OCI-LY7 (cell line): ENCODE measurements at regions of chr3 and their contacts with region 1.

Region 1: DNA sequence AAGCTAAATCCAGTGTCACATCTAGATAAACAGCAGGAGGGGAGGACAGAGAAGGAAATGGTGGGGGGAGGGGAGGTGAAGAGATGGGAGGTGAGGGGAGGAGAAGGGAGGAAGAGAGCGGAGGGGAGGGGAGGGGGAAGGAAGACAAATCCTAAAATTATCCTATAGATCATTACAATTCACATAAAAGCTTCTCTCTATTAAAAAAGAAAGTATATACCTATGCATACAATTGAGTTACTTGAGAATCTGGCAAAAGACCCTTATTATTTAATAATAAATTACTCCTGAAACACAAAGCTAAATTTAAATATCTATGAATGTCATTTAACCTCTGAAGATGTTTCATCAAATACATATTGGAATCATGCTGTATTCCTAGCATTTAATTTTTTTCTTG is 303.9 kb downstream of the MAGI1 start:
- DNase-seq: no peak
- H3K4me3 ChIP-seq: no peak overlapping the region
- H3K27ac ChIP-seq: no peak overlapping the region
- H3K4me1 ChIP-seq: no peaks in the 10 kb centered on the region
- CTCF ChIP-seq: no peak

Region 2: DNA sequence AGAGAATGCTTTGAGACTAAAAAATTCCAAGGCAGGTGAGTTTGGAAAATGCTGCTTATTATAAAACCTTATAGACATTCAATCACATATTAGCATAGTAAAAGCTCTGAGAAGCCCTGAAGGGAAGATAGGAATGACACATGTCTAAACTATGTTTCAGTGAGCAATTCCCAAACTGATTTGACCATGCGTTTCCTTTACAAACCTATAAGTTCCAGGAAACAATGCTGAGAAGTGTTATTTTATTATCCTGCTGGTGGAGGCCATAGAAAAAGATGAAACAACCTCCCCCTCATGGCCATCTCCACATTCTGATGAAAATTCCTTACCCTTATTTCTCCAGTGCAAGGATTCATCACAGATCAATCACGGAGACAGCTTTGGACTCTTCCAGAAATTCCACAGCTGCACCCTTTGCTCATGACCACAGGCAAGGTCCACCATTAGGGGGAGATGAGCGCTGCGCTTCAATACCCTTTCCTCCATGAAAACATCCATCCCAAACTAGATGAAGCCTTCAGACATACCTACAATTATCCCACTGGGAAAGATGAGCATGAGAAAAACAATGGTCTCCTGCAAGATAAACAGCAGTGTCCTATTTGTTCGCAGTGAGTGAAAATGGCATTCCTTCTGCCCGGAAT is 68.2 kb before region 1 on chr3:
- CTCF ChIA-PET with region 1: interaction called, 10 read pairs
- POLR2A ChIA-PET with region 1: no interaction called
- intact Hi-C with region 1: no loop called
- DNase-seq: no peak
- H3K4me3 ChIP-seq: no peak overlapping the region
- H3K27ac ChIP-seq: no peak overlapping the region
- H3K4me1 ChIP-seq: no peaks in the 10 kb centered on the region
- CTCF ChIP-seq: no peak

Region 3: GRCh38 chr3:65953301-65953812 is 218.6 kb after region 1 on chr3:
- CTCF ChIA-PET with region 1: no interaction called
- POLR2A ChIA-PET with region 1: no interaction called
- intact Hi-C with region 1: no loop called
- DNase-seq: no peak
- H3K4me3 ChIP-seq: no peak overlapping the region
- H3K27ac ChIP-seq: no peak overlapping the region
- H3K4me1 ChIP-seq: no peaks in the 10 kb centered on the region
- CTCF ChIP-seq: no peak

Region 4: GRCh38 chr3:66154444-66154861 is 419.7 kb after region 1 on chr3:
- CTCF ChIA-PET with region 1: no interaction called
- POLR2A ChIA-PET with region 1: no interaction called
- intact Hi-C with region 1: no loop called
- DNase-seq: no peak
- H3K4me3 ChIP-seq: no peak overlapping the region
- H3K27ac ChIP-seq: no peak overlapping the region
- H3K4me1 ChIP-seq: no peaks in the 10 kb centered on the region
- CTCF ChIP-seq: no peak